RWPE1 (cell line): ENCODE measurements at regions of chr17 and their contacts with region 1.

Region 1: DNA sequence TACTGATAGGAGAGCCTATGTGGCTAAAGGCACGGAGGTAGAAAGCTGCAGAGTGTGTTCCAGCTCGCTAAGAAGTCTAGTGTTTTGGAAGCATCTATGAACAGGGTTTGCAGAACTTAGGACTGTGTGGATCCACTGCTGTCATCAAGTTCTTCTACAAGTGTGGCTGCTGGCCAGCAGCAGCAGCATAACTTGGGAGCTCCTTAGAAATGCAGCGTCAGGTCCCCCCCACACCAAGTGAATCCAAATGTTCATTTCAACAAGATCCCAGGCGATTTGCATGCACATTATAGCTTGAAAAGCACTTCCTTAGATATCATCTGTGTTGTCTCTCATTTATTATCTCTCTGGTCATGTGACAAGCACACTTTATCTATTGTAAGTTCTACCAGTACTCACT is 131.9 kb upstream of the SHISA6 start:
- DNase-seq: no peak
- H3K27ac ChIP-seq: no peak overlapping the region
- CTCF ChIP-seq: no peak

Region 2: GRCh38 chr17:10743316-10744009 is 365.6 kb before region 1 on chr17:
- CTCF ChIA-PET with region 1: no interaction called
- POLR2A ChIA-PET with region 1: interaction called, 10 read pairs
- DNase-seq: no peak
- H3K27ac ChIP-seq: no peak overlapping the region
- CTCF ChIP-seq: no peak

Region 3: GRCh38 chr17:11094331-11094730 is 14.8 kb before region 1 on chr17:
- CTCF ChIA-PET with region 1: no interaction called
- POLR2A ChIA-PET with region 1: no interaction called
- DNase-seq: no peak
- H3K27ac ChIP-seq: no peak overlapping the region
- CTCF ChIP-seq: no peak

Region 4: DNA sequence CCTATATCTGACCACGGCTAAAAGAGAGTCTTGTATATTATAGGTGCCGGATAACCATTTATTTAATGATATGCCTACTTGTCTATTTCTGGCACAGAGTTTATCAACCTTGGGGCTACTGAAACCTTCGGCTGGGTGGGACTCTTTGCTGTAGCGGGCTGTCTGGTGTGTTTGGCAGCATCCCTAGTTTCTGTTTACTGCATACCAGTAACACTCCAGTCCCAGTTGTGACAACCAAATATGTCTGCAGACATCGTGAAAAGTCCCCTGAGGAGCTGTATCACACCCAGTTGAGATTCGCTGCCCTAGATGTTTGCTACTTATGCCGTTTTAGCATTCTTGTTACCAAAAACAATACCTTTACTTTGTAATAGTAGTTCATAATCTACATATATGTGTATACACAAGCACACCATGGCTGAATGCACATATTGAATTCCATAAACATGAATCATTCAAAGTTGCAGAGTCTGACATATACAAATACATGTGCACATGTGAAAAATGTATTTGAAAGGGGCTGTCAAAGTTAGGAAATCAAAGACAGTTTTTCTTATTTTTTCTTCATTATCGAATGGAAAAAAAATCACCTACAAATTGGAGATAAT is 42.8 kb after region 1 on chr17:
- CTCF ChIA-PET with region 1: no interaction called
- POLR2A ChIA-PET with region 1: no interaction called
- DNase-seq: no peak
- H3K27ac ChIP-seq: no peak overlapping the region
- CTCF ChIP-seq: no peak